Panc1 (cell line): ENCODE measurements at regions of chr4 and their contacts with region 1.

Region 1: DNA sequence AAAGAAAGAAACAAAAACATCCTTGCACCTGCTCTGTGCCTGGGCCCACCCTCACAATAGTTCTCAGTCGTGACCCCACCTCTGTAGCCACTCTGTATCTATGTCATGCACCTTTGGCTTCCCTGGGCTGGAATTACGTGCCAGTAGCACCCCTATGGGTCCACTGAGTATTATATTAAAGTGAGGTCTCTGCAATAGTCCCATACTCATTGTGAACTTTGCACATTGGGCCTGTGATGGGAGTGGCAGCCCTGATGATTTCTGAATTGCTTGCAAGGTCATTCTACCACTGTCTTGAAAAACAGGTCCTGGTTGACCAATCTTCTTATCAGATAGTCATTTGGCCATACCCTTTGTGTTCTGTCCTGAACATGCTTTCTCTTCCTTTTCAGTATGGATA is 1012.1 kb downstream of the RAB28 start:
- DNase-seq: no peak
- ATAC-seq: no peak
- H3K4me3 ChIP-seq: no peak overlapping the region
- H3K27ac ChIP-seq: no peak overlapping the region
- H3K4me1 ChIP-seq: no peaks in the 10 kb centered on the region
- H3K27me3 ChIP-seq: no peaks in the 10 kb centered on the region
- CTCF ChIP-seq: no peak

Region 2: DNA sequence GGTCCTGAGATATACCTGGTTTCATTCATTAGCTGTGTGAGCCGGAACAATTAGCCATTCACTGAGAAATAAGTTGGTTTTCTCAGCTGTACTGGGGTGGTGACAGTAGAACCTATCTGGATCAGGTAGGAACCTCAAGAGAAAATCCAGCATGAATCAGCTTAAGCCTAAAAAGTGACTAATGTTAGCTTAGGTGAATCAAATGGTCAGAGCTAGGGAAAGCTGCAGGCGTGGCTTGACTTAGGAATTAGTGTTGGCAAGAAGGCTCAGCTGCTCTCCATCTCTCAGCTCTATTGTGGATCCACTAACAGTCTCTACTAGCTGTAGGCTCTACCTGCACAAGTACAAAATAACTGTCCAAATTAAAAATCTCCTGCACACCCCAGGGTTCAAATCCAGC is 13.5 kb before region 1 on chr4:
- CTCF ChIA-PET with region 1: no interaction called
- POLR2A ChIA-PET with region 1: no interaction called
- in situ Hi-C with region 1: no loop called
- intact Hi-C with region 1: loop called (anchors 1 kb)
- DNase-seq: no peak
- ATAC-seq: no peak
- H3K4me3 ChIP-seq: no peak overlapping the region
- H3K27ac ChIP-seq: no peak overlapping the region
- H3K4me1 ChIP-seq: no peaks in the 10 kb centered on the region
- H3K27me3 ChIP-seq: no peaks in the 10 kb centered on the region
- CTCF ChIP-seq: no peak

Region 3: DNA sequence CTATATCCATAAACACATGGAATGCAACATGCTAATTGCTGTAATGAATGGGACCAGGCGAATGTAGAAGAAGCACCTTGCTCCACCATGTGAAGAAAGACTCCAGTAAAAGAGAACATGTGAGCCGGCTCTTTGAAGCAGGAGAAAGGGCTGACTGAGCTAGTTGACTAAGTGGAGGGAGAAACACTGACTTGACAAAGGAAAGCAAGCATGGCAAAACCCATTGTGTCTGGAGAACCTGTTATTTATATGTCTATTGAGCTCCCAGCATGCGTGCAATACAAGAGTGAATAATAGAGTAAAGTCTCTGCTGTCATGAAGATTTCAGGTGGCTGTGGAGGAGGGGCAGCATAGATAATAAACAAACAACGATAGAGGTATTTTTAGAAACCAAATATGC is 452.2 kb after region 1 on chr4:
- CTCF ChIA-PET with region 1: no interaction called
- POLR2A ChIA-PET with region 1: no interaction called
- in situ Hi-C with region 1: no loop called
- intact Hi-C with region 1: no loop called
- DNase-seq: no peak
- ATAC-seq: no peak
- H3K4me3 ChIP-seq: no peak overlapping the region
- H3K27ac ChIP-seq: no peak overlapping the region
- H3K4me1 ChIP-seq: no peaks in the 10 kb centered on the region
- H3K27me3 ChIP-seq: no peaks in the 10 kb centered on the region
- CTCF ChIP-seq: no peak